Gastrocnemius medialis (tissue), 4 donors: ENCODE measurements at regions of chr3 and their contacts with region 1.

Region 1: GRCh38 chr3:100068826-100069225 is 45.5 kb downstream of the FILIP1L start:
- DNase-seq: peak; percentile 72 to 79
- ATAC-seq: peak; percentile 86 to 89
- H3K4me3 ChIP-seq: peak overlapping the region in 1 of 4 donors; percentile 19
- H3K27ac ChIP-seq: peak overlapping the region; percentile 63 to 80 (median 74)
- H3K4me1 ChIP-seq: peaks cover 44 to 61% of the 10 kb centered on the region in 2 donors
- H3K27me3 ChIP-seq: no peaks in the 10 kb centered on the region
- CTCF ChIP-seq: peak; percentile 67 to 86 (median 78)
- POLR2A ChIP-seq: no peak

Region 2: DNA sequence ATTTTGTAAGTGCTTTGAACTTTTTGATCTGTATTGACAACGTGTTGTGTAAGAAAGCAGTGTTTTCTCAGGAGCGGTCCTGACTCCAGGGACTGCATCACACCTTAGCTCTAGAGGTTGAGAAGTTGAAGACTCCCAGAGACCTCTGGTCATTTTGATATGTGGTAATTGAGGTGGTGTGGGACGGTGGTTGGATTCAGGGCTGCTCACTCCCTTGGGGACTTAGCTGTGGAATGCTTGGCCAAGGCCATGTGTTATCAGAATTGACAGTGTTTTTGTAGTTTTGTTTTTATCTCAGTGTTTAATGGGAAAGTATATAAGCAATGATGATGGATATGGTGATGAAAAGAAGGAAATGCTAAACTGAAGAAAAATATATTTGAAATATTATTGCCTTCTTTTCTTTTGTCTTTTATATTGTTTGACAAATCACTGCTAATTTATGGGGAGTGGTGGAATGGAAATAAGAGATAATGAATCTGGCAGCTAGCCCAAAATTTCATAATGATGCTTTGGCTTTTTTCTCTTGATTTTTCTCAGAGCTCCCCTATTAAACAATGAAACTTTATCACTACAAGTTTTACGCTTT is 235.1 kb before region 1 on chr3:
- in situ Hi-C with region 1: loop called (anchors 10 to 25 kb)
- intact Hi-C with region 1: no loop called
- DNase-seq: no peak
- ATAC-seq: no peak
- H3K4me3 ChIP-seq: no peak overlapping the region
- H3K27ac ChIP-seq: peak overlapping the region; percentile 4 to 66 (median 48)
- H3K4me1 ChIP-seq: peaks cover 7 to 12% of the 10 kb centered on the region in 2 donors
- H3K27me3 ChIP-seq: no peaks in the 10 kb centered on the region
- CTCF ChIP-seq: no peak
- POLR2A ChIP-seq: no peak

Region 3: GRCh38 chr3:100113723-100114412 is 45.0 kb after region 1 on chr3:
- in situ Hi-C with region 1: no loop called
- intact Hi-C with region 1: loop called (anchors 2 kb)
- DNase-seq: no peak
- ATAC-seq: peak; percentile 16 to 48
- H3K4me3 ChIP-seq: peak overlapping the region; percentile 26 to 46 (median 34)
- H3K27ac ChIP-seq: peak overlapping the region; percentile 84 to 92 (median 86)
- H3K4me1 ChIP-seq: peaks cover 34 to 56% of the 10 kb centered on the region in 2 donors
- H3K27me3 ChIP-seq: no peaks in the 10 kb centered on the region
- CTCF ChIP-seq: no peak
- POLR2A ChIP-seq: no peak

Region 4: DNA sequence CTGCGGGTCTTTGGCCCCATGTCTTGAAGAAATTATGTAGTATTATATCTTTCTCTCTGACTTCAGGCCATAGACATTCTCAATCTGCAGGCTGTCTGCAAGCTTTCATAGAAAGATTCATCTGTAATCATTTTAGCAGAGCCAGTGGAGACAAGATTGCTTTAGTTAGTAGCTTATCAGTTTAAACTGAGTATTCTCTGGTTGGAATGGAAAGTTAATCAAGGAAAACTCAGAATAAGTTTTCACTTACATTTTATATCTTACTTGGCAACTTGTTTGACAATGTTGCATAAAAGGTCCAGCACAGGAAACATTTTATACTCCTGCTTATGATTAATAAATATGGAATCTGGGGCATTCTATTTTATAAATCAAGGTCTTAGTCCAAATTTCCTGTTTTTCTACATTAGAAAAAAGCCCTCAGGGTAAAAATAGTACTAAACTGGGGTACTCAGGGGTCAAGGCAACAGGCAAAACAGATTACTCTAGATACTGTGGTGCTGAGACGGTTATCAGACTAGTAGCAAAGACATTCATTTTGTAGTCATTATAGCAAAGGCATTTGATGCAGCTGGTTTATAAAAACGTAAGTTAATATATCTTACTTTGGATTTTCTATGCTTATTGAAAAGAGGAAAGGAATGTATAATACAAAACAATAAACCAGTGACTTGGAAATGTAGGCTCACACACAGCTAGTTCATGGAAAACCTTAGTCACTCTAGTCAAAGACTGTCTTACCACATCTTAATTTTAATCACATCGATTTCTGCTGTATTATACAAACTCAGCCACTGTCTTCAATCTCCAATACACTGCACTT is 90.7 kb after region 1 on chr3:
- in situ Hi-C with region 1: no loop called
- intact Hi-C with region 1: loop called (anchors 2 kb)
- DNase-seq: no peak
- ATAC-seq: no peak
- H3K4me3 ChIP-seq: peak overlapping the region in 1 of 4 donors; percentile 2
- H3K27ac ChIP-seq: peak overlapping the region; percentile 62 to 79 (median 78)
- H3K4me1 ChIP-seq: peaks cover 54 to 69% of the 10 kb centered on the region in 2 donors
- H3K27me3 ChIP-seq: no peaks in the 10 kb centered on the region
- CTCF ChIP-seq: no peak
- POLR2A ChIP-seq: no peak

Region 5: GRCh38 chr3:100288288-100288894 is 219.6 kb after region 1 on chr3:
- in situ Hi-C with region 1: no loop called
- intact Hi-C with region 1: no loop called
- DNase-seq: no peak
- ATAC-seq: no peak
- H3K4me3 ChIP-seq: no peak overlapping the region
- H3K27ac ChIP-seq: no peak overlapping the region
- H3K4me1 ChIP-seq: no peaks in the 10 kb centered on the region
- H3K27me3 ChIP-seq: no peaks in the 10 kb centered on the region
- CTCF ChIP-seq: no peak
- POLR2A ChIP-seq: no peak